B cell (primary cell): ENCODE measurements at regions of chr14 and their contacts with region 1.

Region 1: DNA sequence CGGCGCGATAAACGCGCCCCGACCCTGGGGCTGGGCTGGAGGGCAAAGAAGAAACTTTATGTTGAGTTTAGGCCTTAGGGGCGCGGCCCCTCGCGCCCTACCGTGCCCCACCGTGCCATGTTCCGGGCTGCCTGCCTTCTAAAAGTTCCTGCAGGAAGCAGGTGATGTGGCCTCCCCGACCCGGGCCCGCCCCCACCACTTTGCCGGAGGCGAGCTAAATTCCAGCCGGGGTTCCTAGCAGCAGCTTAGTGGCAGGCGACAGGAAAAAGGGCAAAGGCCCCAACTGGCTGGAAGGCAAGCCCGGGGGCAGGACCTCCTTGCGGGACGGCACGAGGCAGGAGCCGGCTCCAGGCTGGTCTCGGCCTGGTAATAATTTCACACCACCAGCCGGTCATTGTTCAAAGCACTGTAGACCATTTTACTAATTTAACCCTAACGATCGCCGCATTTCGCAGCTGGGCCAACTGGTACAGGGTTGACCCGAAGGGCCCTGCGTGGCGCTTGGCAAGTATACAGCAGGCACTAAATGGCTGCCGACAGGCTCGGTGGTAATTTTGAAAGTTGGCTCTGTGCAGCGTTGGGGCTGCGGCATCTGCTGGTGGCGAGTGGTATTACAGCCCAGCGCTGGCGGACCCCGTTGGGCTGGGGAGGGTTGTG is 895 bp upstream of the CCDC88C start:
- DNase-seq: peak; percentile 88
- ATAC-seq: peak; percentile 34
- H3K4me3 ChIP-seq: peak overlapping the region; percentile 30 to 97 (median 40)
- H3K4me3 Mint-ChIP-seq: peak overlapping the region; percentile 84
- H3K27ac ChIP-seq: peak overlapping the region; percentile 75 to 77
- H3K27ac Mint-ChIP-seq: peak overlapping the region; percentile 90
- H3K4me1 ChIP-seq: peaks cover 38% of the 10 kb centered on the region in 2 donors
- H3K4me1 Mint-ChIP-seq: peaks cover 38% of the 10 kb centered on the region
- H3K27me3 ChIP-seq: no peaks in the 10 kb centered on the region
- H3K27me3 Mint-ChIP-seq: no peaks in the 10 kb centered on the region
- CTCF ChIP-seq: peak; percentile 96

Region 2: DNA sequence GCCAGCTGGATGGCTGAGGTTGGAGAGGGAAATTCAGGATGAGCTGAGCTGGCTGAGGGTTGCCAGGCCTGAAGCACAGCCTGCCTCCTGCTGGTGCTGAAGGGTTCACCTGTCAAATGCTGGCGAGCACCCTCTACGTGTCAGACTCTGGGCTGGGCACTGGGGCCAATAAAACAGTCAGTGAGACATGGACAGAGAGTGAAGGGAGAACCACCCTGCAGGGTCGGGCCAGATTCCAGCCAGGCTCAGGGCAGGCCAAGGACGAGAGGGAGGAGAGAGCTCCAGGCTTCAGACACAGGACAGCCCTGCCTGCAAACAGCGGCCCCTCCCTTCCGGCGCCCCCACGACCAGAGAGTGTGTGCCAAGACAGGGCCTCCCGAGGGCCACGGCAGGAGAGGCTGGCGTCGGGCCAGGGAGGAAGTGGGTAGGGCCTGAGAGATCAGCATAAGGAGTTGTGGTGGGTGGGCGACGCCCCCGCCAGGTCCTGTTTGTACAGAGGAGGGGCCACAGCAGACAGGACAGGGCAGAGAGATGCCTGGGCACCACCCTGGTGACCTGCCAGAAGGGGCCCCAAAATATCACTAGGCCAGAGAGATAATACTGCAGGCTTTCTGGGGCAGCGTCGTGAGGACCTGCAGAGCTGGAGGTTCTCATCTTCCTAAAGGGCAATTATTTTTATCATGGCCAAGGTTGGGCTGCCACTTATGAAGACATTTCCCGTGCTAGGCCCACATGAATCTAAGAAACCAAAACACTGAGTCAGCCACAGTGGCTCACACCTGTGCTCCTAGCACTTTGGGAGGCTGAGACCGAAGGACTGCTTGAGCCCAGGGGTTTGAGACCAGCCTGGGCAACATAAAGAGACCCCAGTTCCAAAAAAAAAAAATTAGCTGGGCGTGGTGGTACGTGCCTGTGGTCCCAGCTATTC is 100.9 kb before region 1 on chr14:
- CTCF ChIA-PET with region 1: interaction called, 289 read pairs
- POLR2A ChIA-PET with region 1: interaction called, 5 read pairs
- intact Hi-C with region 1: loop called (anchors 1 kb)
- DNase-seq: peak; percentile 68
- ATAC-seq: peak; percentile 41
- H3K4me3 ChIP-seq: peak overlapping the region in 2 of 5 experiments; percentile 25 to 37
- H3K4me3 Mint-ChIP-seq: peak overlapping the region; percentile 87
- H3K27ac ChIP-seq: peak overlapping the region; percentile 87 to 92
- H3K27ac Mint-ChIP-seq: peak overlapping the region; percentile 95
- H3K4me1 ChIP-seq: peaks cover 64 to 79% of the 10 kb centered on the region in 2 donors
- H3K4me1 Mint-ChIP-seq: peaks cover 69% of the 10 kb centered on the region
- H3K27me3 ChIP-seq: no peaks in the 10 kb centered on the region
- H3K27me3 Mint-ChIP-seq: no peaks in the 10 kb centered on the region
- CTCF ChIP-seq: no peak

Region 3: GRCh38 chr14:91350813-91351511 is 67.6 kb before region 1 on chr14:
- CTCF ChIA-PET with region 1: interaction called, 69 read pairs
- POLR2A ChIA-PET with region 1: interaction called, 19 read pairs
- intact Hi-C with region 1: loop called (anchors 1 kb)
- DNase-seq: peak; percentile 71
- ATAC-seq: peak; percentile 61
- H3K4me3 ChIP-seq: peak overlapping the region in 4 of 5 experiments; percentile 0 to 49 (median 25)
- H3K4me3 Mint-ChIP-seq: peak overlapping the region; percentile 92
- H3K27ac ChIP-seq: peak overlapping the region; percentile 25 to 61
- H3K27ac Mint-ChIP-seq: peak overlapping the region; percentile 93
- H3K4me1 ChIP-seq: peaks cover 61 to 74% of the 10 kb centered on the region in 2 donors
- H3K4me1 Mint-ChIP-seq: peaks cover 82% of the 10 kb centered on the region
- H3K27me3 ChIP-seq: no peaks in the 10 kb centered on the region
- H3K27me3 Mint-ChIP-seq: no peaks in the 10 kb centered on the region
- CTCF ChIP-seq: no peak

Region 4: GRCh38 chr14:91373591-91374254 is 44.8 kb before region 1 on chr14:
- CTCF ChIA-PET with region 1: interaction called, 17 read pairs
- POLR2A ChIA-PET with region 1: interaction called, 6 read pairs
- intact Hi-C with region 1: no loop called
- DNase-seq: peak; percentile 63
- ATAC-seq: peak; percentile 54
- H3K4me3 ChIP-seq: peak overlapping the region in 3 of 5 experiments; percentile 5 to 31 (median 9)
- H3K4me3 Mint-ChIP-seq: peak overlapping the region; percentile 88
- H3K27ac ChIP-seq: peak overlapping the region; percentile 73 to 80
- H3K27ac Mint-ChIP-seq: peak overlapping the region; percentile 96
- H3K4me1 ChIP-seq: peaks cover 84 to 98% of the 10 kb centered on the region in 2 donors
- H3K4me1 Mint-ChIP-seq: peaks cover 97% of the 10 kb centered on the region
- H3K27me3 ChIP-seq: no peaks in the 10 kb centered on the region
- H3K27me3 Mint-ChIP-seq: no peaks in the 10 kb centered on the region
- CTCF ChIP-seq: no peak

Region 5: GRCh38 chr14:91493169-91493568 is 74.7 kb after region 1 on chr14:
- CTCF ChIA-PET with region 1: no interaction called
- POLR2A ChIA-PET with region 1: no interaction called
- intact Hi-C with region 1: loop called (anchors 1 kb)
- DNase-seq: no peak
- ATAC-seq: no peak
- H3K4me3 ChIP-seq: no peak overlapping the region
- H3K4me3 Mint-ChIP-seq: no peak overlapping the region
- H3K27ac ChIP-seq: peak overlapping the region in 1 of 2 donors; percentile 40
- H3K27ac Mint-ChIP-seq: peak overlapping the region; percentile 70
- H3K4me1 ChIP-seq: peaks cover 61 to 65% of the 10 kb centered on the region in 2 donors
- H3K4me1 Mint-ChIP-seq: peaks cover 61% of the 10 kb centered on the region
- H3K27me3 ChIP-seq: no peaks in the 10 kb centered on the region
- H3K27me3 Mint-ChIP-seq: no peaks in the 10 kb centered on the region
- CTCF ChIP-seq: no peak